Astrocyte of the cerebellum (primary cell): ENCODE measurements at regions of chr14 and their contacts with region 1.

Region 1: GRCh38 chr14:92292673-92293072 is 30.3 kb upstream of the SLC24A4 start:
- DNase-seq: no peak
- H3K4me3 ChIP-seq: no peak overlapping the region
- CTCF ChIP-seq: no peak

Region 2: GRCh38 chr14:92373336-92373735 is 80.7 kb after region 1 on chr14:
- in situ Hi-C with region 1: loop called (anchors 5 kb)
- DNase-seq: no peak
- H3K4me3 ChIP-seq: no peak overlapping the region
- CTCF ChIP-seq: no peak